ENCODE measurements at regions of chr12 and their contacts with region 1.

Region 1: DNA sequence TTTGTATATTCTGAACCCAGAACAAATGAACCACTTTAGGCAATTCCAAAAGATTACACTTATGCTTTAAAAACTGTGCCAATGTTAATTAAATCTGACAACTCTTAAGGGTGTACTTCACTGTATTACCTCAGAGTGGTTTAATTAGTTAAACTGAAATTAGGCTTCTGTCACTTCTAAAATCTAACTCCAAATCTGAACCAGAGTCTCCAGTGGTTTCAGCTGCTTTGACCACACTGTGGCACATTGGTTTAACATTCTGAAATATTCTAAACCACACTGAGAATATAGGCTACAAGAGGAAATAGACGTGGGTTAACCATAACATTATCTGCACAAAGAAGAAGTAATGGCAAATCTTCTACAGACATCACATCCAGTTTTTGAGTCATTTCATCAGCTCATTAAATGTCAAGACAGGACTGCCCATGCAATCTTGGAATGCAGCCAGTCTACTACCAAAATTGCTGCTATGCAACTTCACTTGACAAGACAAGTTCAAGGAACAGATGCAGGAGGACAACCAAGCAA is 94.8 kb downstream of the LRP6 start:
- DNase-seq: peak; percentile 6
- H3K4me3 Mint-ChIP-seq: no peak overlapping the region
- H3K27ac Mint-ChIP-seq: no peak overlapping the region
- H3K4me1 Mint-ChIP-seq: peaks cover 23% of the 10 kb centered on the region
- H3K27me3 Mint-ChIP-seq: no peaks in the 10 kb centered on the region
- CTCF ChIP-seq: no peak

Region 2: DNA sequence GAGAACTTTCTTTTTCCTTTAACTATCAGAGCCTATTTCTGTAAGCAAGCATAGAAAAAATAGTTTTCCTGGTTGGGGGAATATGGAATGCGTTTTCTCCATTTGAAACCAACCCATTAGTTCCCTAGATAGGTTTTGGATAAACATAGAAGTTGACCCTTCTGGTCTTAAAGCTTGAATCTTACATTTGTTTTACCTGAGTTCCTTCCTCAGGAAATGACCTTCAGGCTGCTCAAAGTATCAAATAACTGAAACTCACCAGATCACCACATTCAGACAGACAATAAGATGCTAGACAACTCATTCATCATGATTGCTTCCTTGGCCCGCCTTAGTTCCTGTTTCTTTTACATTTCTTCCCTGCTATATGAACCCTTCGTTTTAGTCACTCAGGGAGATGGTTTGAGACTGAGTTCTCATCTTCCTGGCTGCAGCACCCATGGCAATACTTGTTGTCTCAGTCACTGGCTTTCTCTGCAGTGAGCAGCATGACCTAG is 42.6 kb after region 1 on chr12:
- CTCF ChIA-PET with region 1: no interaction called
- intact Hi-C with region 1: loop called (anchors 5 kb)
- DNase-seq: peak; percentile 7
- H3K4me3 Mint-ChIP-seq: peak overlapping the region; percentile 29
- H3K27ac Mint-ChIP-seq: peak overlapping the region; percentile 63
- H3K4me1 Mint-ChIP-seq: peaks cover 92% of the 10 kb centered on the region
- H3K27me3 Mint-ChIP-seq: no peaks in the 10 kb centered on the region
- CTCF ChIP-seq: no peak

Region 3: GRCh38 chr12:12240662-12241340 is 68.7 kb after region 1 on chr12:
- CTCF ChIA-PET with region 1: no interaction called
- intact Hi-C with region 1: no loop called
- DNase-seq: no peak
- H3K4me3 Mint-ChIP-seq: peak overlapping the region; percentile 18
- H3K27ac Mint-ChIP-seq: peak overlapping the region; percentile 61
- H3K4me1 Mint-ChIP-seq: peaks cover 44% of the 10 kb centered on the region
- H3K27me3 Mint-ChIP-seq: no peaks in the 10 kb centered on the region
- CTCF ChIP-seq: no peak

Region 4: DNA sequence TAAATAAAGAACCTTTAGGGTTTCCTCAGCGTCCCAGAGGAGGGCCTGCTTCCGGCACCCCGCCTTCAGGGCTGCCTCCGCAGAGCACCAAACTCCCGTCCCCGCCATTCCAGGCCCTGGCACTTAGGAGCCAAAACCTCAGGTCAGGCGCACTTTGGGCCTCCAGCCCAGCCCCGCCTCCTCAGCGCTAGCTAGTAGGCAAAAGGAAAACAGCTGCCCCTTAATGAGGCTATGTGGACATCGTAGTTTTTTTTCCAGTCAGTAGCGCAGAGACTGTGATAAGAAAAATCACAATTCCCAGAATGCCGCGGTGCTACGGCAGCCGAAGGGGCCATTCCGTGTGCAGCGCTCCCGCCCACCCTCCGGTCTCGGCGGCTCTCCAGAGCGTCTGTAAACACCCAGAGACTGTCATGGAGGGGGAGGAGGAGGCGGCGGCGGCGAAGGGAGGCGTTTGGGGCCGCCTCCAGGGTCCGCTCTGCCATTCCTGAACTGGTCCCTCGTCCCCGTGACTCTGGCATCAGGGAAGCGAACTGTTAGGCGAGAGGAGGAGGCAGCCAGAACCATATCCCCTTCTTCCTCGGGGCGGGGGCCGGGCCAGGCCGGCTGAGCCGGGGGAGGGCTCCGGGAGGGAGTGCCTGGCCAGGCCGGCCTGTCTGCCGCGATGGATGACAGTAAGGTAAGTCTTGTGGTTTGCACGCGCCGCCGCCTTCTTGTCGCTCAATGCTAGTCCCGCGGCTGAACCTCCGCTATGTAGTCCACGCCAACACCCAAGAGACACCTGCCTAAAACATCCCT is 439.7 kb after region 1 on chr12 and contains the start of gene CREBL2:
- CTCF ChIA-PET with region 1: no interaction called
- intact Hi-C with region 1: no loop called
- DNase-seq: peak; percentile 88
- H3K4me3 Mint-ChIP-seq: peak within 1 kb of the TSS; percentile 94
- H3K27ac Mint-ChIP-seq: peak within 1 kb of the TSS; percentile 90
- H3K4me1 Mint-ChIP-seq: peaks cover 43% of the 10 kb centered on the region
- H3K27me3 Mint-ChIP-seq: no peaks in the 10 kb centered on the region
- CTCF ChIP-seq: no peak
- total RNA-seq, gene CREBL2: 17.0 and 20.4 TPM in 2 replicates